H1 (cell line): ENCODE measurements at regions of chr17 and their contacts with region 1.

Region 1: DNA sequence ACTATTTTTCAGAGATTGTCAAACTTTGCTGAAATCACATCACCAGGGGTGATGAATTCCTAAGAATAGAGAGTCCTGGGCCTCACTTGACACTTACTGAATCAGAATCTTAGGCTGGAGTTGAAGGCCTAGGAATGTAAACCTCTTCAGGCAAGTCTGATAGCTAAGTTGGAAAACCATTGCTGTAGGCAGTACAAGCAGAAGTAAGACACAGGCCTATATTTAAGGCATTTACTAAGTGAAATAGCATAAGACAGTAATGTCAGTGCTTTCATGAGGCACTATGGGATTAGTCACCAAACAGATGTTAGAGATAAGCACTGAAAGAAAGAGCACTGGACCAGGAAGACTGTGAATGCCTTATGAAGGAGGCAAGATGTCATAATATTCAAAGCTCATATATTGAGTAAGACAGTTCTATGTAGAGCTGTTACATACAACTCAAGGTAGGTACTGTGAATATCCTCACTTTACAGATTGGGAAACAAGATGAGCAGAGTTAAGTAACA is 21.5 kb downstream of the DCAF7 start:
- DNase-seq: no peak
- H3K4me3 ChIP-seq: no peak overlapping the region
- H3K27ac ChIP-seq: no peak overlapping the region
- H3K4me1 ChIP-seq: no peaks in the 10 kb centered on the region; a peak in 1 of 7 replicates
- H3K27me3 ChIP-seq: no peaks in the 10 kb centered on the region
- CTCF ChIP-seq: no peak
- EP300 ChIP-seq: no peak
- POLR2A ChIP-seq: no peak
- RAD21 ChIP-seq: no peak

Region 2: GRCh38 chr17:63458478-63458877 is 113.3 kb before region 1 on chr17:
- CTCF ChIA-PET with region 1: no interaction called
- POLR2A ChIA-PET with region 1: no interaction called
- DNase-seq: no peak
- H3K4me3 ChIP-seq: no peak overlapping the region
- H3K27ac ChIP-seq: no peak overlapping the region
- H3K4me1 ChIP-seq: no peaks in the 10 kb centered on the region
- H3K27me3 ChIP-seq: no peaks in the 10 kb centered on the region
- CTCF ChIP-seq: no peak
- EP300 ChIP-seq: no peak
- POLR2A ChIP-seq: no peak
- RAD21 ChIP-seq: no peak

Region 3: GRCh38 chr17:63549946-63550807 is 21.6 kb before region 1 on chr17 and contains the start of gene DCAF7:
- CTCF ChIA-PET with region 1: interaction called, 10 read pairs
- POLR2A ChIA-PET with region 1: interaction called, 4 read pairs
- DNase-seq: peak; percentile 96 to 97
- H3K4me3 ChIP-seq: peak within 1 kb of the TSS; percentile 88 to 95 (median 90)
- H3K27ac ChIP-seq: peak within 1 kb of the TSS; percentile 68; the same call in 1 of the 2 replicates
- H3K4me1 ChIP-seq: peaks cover 0 to 4% (median 3%) of the 10 kb centered on the region in 4 experiments; a peak in 5 of 7 replicates
- H3K27me3 ChIP-seq: no peaks in the 10 kb centered on the region
- CTCF ChIP-seq: no peak
- EP300 ChIP-seq: no peak
- POLR2A ChIP-seq: peak in 1 of 2 experiments; percentile 78; a peak in 2 of 3 replicates
- RAD21 ChIP-seq: no peak
- total RNA-seq, gene DCAF7: 87.3 and 94.1 TPM in 2 replicates

Region 4: DNA sequence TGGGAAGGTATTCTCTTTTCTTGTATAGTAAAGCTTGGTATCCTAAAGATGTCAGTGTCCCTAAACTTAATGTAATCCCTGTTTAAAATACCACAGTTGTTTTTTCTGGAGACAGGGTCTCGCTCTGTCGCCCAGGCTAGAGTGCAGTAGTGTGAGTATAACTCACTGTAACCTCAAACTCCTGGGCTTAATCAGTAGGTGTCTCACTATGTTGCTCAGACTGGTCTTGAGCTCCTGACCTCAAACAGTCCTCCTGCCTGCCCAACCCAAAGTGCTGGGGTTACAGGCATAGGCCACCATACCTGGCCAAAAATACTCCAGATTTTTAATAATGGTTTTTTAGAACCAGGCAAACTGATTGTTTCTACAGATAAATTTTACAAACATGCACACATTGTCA is 13.4 kb before region 1 on chr17:
- CTCF ChIA-PET with region 1: interaction called, 16 read pairs
- POLR2A ChIA-PET with region 1: interaction called, 3 read pairs
- DNase-seq: no peak
- H3K4me3 ChIP-seq: no peak overlapping the region
- H3K27ac ChIP-seq: no peak overlapping the region
- H3K4me1 ChIP-seq: no peaks in the 10 kb centered on the region
- H3K27me3 ChIP-seq: no peaks in the 10 kb centered on the region
- CTCF ChIP-seq: no peak
- EP300 ChIP-seq: no peak
- POLR2A ChIP-seq: no peak
- RAD21 ChIP-seq: no peak

Region 5: DNA sequence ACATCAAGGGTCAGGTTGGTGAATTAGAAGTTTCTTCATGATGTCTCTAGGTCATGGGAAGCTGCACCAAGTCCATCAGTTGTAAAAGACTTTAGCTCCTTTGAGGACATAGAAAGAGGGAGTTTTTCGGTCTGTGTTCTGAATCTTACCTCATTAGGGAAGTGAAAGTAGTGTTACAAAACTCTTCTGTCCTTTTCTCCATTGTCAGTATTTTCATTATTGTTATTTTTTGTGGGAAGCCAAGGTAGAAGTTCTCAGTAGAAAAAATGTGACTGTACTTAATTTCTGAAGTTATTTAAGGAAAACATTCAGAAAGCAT is 74.6 kb after region 1 on chr17:
- CTCF ChIA-PET with region 1: no interaction called
- POLR2A ChIA-PET with region 1: no interaction called
- DNase-seq: no peak
- H3K4me3 ChIP-seq: no peak overlapping the region
- H3K27ac ChIP-seq: no peak overlapping the region
- H3K4me1 ChIP-seq: peaks cover 0 to 12% (median 1%) of the 10 kb centered on the region in 4 experiments; a peak in 1 of 7 replicates
- H3K27me3 ChIP-seq: no peaks in the 10 kb centered on the region
- CTCF ChIP-seq: no peak
- EP300 ChIP-seq: no peak
- POLR2A ChIP-seq: no peak
- RAD21 ChIP-seq: no peak

Region 6: DNA sequence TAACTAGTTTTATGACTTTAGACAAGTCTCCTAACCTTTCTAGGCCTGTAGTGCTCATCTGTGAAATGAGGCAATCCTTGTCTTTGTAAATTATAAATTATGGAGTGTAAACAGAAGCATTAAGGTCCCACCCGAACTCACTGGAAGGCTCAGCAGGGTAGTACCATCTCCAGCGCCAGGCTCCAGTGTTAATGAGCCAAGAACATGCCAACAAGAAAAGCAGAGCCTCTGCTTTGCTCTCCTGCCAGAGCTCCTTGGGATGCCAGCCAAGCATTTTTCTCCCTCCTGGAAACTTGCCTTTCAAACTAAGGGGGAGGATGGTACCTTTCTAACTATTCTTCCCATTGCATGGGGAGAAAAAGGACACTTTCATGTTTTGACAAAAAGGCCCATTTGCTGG is 113.2 kb after region 1 on chr17:
- CTCF ChIA-PET with region 1: no interaction called
- POLR2A ChIA-PET with region 1: no interaction called
- DNase-seq: no peak
- H3K4me3 ChIP-seq: no peak overlapping the region
- H3K27ac ChIP-seq: no peak overlapping the region
- H3K4me1 ChIP-seq: no peaks in the 10 kb centered on the region
- H3K27me3 ChIP-seq: no peaks in the 10 kb centered on the region
- CTCF ChIP-seq: no peak
- EP300 ChIP-seq: no peak
- POLR2A ChIP-seq: no peak
- RAD21 ChIP-seq: no peak

Region 7: GRCh38 chr17:63702721-63703015 is 130.9 kb after region 1 on chr17:
- CTCF ChIA-PET with region 1: no interaction called
- POLR2A ChIA-PET with region 1: no interaction called
- DNase-seq: no peak
- H3K4me3 ChIP-seq: no peak overlapping the region
- H3K27ac ChIP-seq: no peak overlapping the region
- H3K4me1 ChIP-seq: peaks cover 3 to 20% (median 13%) of the 10 kb centered on the region in 4 experiments; a peak in 6 of 7 replicates
- H3K27me3 ChIP-seq: peaks cover 0 to 5% (median 0%) of the 10 kb centered on the region in 4 experiments; a peak in 3 of 7 replicates
- CTCF ChIP-seq: no peak
- EP300 ChIP-seq: no peak
- POLR2A ChIP-seq: no peak
- RAD21 ChIP-seq: no peak